Psoas muscle (tissue), 8 donors: ENCODE measurements at regions of chrX and their contacts with region 1.

Region 1: DNA sequence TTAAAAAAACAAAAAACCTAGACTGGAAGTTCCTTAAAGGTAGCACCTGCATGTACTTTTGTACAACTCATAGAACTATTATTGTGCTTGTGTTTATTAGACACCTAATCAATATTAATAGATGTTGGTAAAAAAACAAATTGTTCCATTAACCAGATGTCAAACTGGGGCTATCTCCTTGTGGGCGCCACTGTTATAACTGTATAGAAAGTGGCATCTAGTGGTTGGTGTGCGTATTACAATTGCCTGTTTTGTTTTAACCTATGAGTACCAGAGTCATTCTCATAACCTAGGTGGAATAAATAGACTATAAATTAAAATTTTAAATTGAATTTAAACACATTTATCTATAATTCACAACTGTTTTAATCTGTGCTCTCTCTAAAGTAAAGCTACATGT is 97.4 kb downstream of the COL4A5 start:
- DNase-seq: no peak
- ATAC-seq: peak; percentile 57 to 80 (median 71)
- H3K4me3 ChIP-seq: no peak overlapping the region
- H3K27ac ChIP-seq: no peak overlapping the region
- H3K4me1 ChIP-seq: no peaks in the 10 kb centered on the region
- H3K27me3 ChIP-seq: no peaks in the 10 kb centered on the region
- CTCF ChIP-seq: peak; percentile 68

Region 2: GRCh38 chrX:108224727-108225621 is 312.0 kb before region 1 on chrX:
- intact Hi-C with region 1: loop called (anchors 2 to 5 kb)
- DNase-seq: peak in 1 of 2 donors; percentile 31
- ATAC-seq: peak in 1 of 4 donors; percentile 70
- H3K4me3 ChIP-seq: no peak overlapping the region
- H3K27ac ChIP-seq: no peak overlapping the region
- H3K4me1 ChIP-seq: no peaks in the 10 kb centered on the region
- H3K27me3 ChIP-seq: peaks cover 0 to 21% (median 0%) of the 10 kb centered on the region in 3 donors
- CTCF ChIP-seq: peak; percentile 52

Region 3: DNA sequence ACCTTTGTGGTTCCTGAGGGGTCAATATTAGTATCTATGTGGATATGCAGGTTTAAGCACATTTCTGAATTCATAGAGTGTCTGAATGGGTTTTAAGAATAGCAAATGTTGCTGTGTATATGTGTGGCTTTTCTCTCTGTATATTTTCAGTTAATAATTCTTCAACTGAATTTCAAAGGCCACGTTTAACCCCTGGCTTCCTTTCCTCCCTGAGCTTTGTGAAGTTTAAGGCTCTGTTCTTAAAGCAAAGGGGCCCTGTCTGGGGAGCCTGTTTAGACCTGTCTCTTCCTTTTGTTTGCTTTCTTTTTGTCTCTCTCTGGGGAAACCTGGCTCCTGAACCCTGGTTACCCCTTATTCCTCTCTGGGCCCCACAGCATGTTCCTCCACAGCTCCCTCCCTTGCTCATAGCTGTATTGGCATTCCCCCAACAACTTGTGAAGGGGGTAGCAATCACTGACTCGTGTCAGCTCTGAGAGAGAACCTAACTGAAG is 237.9 kb before region 1 on chrX:
- intact Hi-C with region 1: loop called (anchors 5 to 10 kb)
- DNase-seq: no peak
- ATAC-seq: no peak
- H3K4me3 ChIP-seq: no peak overlapping the region
- H3K27ac ChIP-seq: no peak overlapping the region
- H3K4me1 ChIP-seq: no peaks in the 10 kb centered on the region
- H3K27me3 ChIP-seq: peaks cover 0 to 3% (median 0%) of the 10 kb centered on the region in 3 donors
- CTCF ChIP-seq: no peak